ENCODE measurements at regions of chr15 and their contacts with region 1.

Region 1: DNA sequence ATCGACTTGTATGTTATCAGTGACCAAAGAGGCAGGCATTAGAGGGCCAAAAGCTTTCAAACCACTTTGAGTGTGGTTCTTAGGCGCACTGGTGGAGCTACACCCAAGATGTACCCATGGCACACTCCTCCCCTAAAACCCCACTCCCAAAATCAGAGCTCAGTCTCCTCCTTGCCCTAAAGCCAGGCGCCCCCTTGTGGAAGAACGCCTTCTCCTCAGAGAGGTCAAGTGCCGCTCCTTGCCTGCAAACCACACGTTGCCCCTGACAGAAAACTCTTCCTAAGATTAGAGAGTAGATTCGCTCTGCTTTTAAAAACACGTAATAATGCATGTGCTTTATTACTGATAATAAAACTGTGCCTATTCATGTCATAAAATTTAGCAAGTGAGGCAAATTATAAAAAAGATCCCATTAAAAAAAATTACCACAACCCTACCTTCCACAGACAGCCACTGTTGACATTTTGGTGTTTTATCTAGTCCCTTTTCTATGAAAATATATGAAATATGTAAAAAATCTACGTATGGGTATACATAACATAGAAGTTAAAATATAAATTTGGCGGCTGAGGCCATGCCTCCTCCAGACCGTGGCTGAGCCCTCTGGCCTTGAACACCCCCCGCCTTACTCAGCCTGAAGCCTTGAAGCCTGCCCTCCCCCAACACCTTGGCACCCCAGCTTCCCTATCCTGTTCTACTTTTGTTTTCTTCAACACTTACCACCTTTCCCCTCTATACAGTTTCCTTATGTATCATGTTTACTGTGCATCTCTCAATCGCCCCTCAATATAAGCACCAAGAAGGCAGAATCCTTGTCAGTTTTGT is 33.5 kb downstream of the BCL2L10 start:
- DNase-seq: peak; percentile 90
- ATAC-seq: peak; percentile 84

Region 2: DNA sequence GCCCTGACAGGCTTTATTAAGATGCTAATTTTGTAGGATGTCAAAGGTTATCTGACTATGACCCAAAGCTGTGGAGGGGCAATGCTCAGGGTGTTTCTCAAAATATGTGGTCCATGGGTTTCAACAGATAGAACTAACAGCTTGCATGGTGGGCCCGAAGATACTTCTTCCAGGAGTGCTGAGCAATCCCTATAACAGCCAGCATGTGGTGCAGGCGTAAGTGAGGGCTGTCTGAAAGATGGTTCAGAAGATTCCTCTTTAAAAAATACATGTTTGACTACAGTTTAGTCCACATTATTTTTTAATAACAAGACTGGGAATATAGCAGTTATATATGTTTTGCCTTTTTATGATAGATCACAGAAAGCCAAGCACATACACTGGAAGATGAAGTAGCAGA is 390.2 kb before region 1 on chr15:
- intact Hi-C with region 1: no loop called
- DNase-seq: no peak
- ATAC-seq: no peak

Region 3: GRCh38 chr15:51982013-51982769 is 96.9 kb before region 1 on chr15:
- intact Hi-C with region 1: loop called (anchors 5 kb)
- DNase-seq: no peak
- ATAC-seq: peak; percentile 77

Region 4: GRCh38 chr15:52667597-52667996 is 588.5 kb after region 1 on chr15:
- intact Hi-C with region 1: no loop called
- DNase-seq: no peak
- ATAC-seq: peak; percentile 56

Measured in left ventricle myocardium superior (tissue), 1 donor.